H1 (cell line): ENCODE measurements at regions of chr11 and their contacts with region 1.

Region 1: GRCh38 chr11:70467201-70468085 is 69.1 kb downstream of the CTTN start:
- DNase-seq: peak in 1 of 2 experiments; percentile 91
- H3K4me3 ChIP-seq: no peak overlapping the region
- H3K27ac ChIP-seq: no peak overlapping the region
- H3K4me1 ChIP-seq: peaks cover 0 to 4% (median under 1%) of the 10 kb centered on the region in 4 experiments; a peak in 3 of 7 replicates
- H3K27me3 ChIP-seq: no peaks in the 10 kb centered on the region
- CTCF ChIP-seq: peak; percentile 70 to 81 (median 76)
- EP300 ChIP-seq: no peak
- POLR2A ChIP-seq: no peak
- RAD21 ChIP-seq: peak; percentile 93 to 95

Region 2: DNA sequence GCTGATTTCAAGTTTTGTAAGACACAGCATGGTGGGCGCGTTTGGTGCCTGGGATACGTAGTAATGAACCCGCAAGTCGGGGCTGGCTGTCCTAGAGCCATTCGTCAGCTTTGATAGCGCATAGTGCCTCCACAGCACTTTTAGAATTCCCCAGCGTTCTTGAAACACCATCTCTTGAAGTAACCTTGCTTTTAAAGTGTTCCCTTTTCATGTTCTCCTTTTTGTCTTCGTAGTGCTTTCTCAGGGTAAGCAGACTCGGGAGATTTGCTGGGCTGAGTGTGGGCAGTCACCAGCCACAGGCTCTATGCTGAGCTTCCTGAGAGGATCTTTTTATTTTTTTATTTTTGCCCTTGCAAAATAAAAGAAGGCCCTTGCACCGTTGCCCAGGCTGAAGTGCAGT is 108.7 kb before region 1 on chr11:
- CTCF ChIA-PET with region 1: no interaction called
- POLR2A ChIA-PET with region 1: no interaction called
- DNase-seq: peak in 1 of 2 experiments; percentile 24
- H3K4me3 ChIP-seq: no peak overlapping the region
- H3K27ac ChIP-seq: no peak overlapping the region
- H3K4me1 ChIP-seq: no peaks in the 10 kb centered on the region
- H3K27me3 ChIP-seq: no peaks in the 10 kb centered on the region
- CTCF ChIP-seq: no peak
- EP300 ChIP-seq: no peak
- POLR2A ChIP-seq: no peak
- RAD21 ChIP-seq: no peak

Region 3: GRCh38 chr11:70483077-70483861 is 15.8 kb after region 1 on chr11:
- CTCF ChIA-PET with region 1: interaction called, 90 read pairs
- POLR2A ChIA-PET with region 1: interaction called, 3 read pairs
- DNase-seq: no peak
- H3K4me3 ChIP-seq: no peak overlapping the region
- H3K27ac ChIP-seq: no peak overlapping the region
- H3K4me1 ChIP-seq: no peaks in the 10 kb centered on the region
- H3K27me3 ChIP-seq: no peaks in the 10 kb centered on the region
- CTCF ChIP-seq: peak; percentile 26 to 50 (median 45); a peak in 3 of 4 replicates
- EP300 ChIP-seq: no peak
- POLR2A ChIP-seq: no peak
- RAD21 ChIP-seq: peak; percentile 20 to 21; a peak in 2 of 4 replicates

Region 4: DNA sequence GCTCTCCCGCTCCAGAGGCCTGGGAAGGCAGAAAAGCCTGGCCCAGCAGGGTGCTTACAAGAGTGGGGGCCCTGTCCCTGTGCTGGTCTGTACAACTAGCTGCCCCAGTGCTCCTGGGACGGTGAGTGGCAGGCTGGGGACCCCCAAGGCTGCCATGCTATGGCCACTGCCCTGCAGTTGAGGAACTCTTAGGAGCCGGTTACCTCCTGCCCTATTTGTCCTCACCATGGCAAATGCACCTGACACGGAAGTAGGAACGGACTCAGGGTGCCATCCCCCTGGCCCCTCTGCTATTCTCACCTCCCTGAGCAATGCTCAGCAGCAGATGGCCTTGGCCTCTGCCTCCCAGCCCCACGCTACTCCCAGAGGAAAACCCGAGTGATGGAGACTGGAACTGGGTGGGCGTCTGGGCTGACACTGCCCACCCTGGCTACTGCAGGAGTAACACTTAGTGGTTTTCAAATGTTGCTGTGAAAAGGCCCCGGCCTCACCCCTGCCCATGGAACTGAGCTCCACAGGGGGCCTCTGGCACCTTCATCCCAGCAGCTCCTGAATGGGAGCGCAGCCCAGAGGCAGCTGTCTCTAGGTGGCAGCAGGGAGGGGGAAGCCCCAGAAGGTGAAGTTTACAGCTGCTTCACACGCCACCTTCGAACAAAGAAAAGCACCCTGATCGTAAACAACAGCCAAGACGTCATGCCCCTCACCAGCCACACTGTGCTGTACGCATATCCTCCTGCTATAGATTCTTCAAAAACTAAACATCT is 36.2 kb after region 1 on chr11:
- CTCF ChIA-PET with region 1: interaction called, 12 read pairs
- POLR2A ChIA-PET with region 1: no interaction called
- DNase-seq: no peak
- H3K4me3 ChIP-seq: no peak overlapping the region
- H3K27ac ChIP-seq: no peak overlapping the region
- H3K4me1 ChIP-seq: peaks cover 0 to 10% (median 6%) of the 10 kb centered on the region in 4 experiments; a peak in 4 of 7 replicates
- H3K27me3 ChIP-seq: no peaks in the 10 kb centered on the region
- CTCF ChIP-seq: peak in 2 of 3 experiments; percentile 35 to 41; a peak in 3 of 4 replicates
- EP300 ChIP-seq: no peak
- POLR2A ChIP-seq: no peak
- RAD21 ChIP-seq: peak; percentile 37 to 50

Region 5: DNA sequence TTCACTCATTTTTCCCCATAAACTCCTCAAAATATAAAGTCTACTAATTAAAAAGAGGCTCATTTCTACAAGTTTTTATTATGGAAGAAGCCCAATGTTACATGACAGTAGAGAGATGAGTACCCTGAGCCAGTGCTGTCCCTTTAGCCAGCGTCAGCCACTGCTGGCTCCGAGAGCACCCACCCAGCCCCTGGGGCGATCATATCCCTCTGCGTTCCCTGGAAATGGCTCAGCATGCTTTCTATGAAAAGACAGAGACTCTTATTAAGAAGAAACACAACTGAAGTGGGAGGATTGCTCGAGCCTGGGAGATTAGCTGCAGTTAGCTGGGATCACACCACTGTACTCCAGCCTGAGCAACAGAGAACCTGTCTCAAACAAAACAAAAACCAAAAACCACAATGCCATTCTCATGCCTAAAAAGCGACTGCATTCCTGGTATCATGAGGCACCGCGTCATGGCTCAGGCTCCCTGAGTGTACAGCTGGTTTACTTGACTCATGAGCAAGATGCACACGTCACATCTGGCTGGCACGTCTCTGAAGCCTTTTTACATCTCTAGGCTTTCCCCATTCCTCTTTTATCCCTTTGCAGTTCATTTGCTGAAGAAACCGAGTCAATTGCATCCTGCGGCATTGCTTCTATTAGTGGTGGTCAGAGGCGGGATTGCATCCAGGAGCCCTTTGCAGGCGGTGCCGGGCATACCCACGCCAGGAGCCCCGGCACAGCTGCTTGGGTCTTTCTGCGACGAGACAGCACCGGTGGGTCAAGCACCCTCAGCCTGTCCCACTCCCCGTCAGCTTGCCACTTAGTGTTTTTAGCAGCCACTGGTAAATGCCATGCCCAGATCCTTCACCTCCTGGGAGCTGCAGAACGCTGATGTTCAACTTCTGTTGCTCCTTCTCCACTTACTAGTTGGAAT is 50.8 kb after region 1 on chr11:
- CTCF ChIA-PET with region 1: interaction called, 11 read pairs
- POLR2A ChIA-PET with region 1: no interaction called
- DNase-seq: no peak
- H3K4me3 ChIP-seq: no peak overlapping the region
- H3K27ac ChIP-seq: no peak overlapping the region
- H3K4me1 ChIP-seq: peaks cover 0 to 14% (median 8%) of the 10 kb centered on the region in 4 experiments; a peak in 6 of 7 replicates
- H3K27me3 ChIP-seq: no peaks in the 10 kb centered on the region; a peak in 1 of 7 replicates
- CTCF ChIP-seq: peak in 2 of 3 experiments; percentile 11 to 14; a peak in 2 of 4 replicates
- EP300 ChIP-seq: no peak
- POLR2A ChIP-seq: no peak
- RAD21 ChIP-seq: peak in 1 of 2 experiments; percentile 3; a peak in 1 of 4 replicates

Region 6: DNA sequence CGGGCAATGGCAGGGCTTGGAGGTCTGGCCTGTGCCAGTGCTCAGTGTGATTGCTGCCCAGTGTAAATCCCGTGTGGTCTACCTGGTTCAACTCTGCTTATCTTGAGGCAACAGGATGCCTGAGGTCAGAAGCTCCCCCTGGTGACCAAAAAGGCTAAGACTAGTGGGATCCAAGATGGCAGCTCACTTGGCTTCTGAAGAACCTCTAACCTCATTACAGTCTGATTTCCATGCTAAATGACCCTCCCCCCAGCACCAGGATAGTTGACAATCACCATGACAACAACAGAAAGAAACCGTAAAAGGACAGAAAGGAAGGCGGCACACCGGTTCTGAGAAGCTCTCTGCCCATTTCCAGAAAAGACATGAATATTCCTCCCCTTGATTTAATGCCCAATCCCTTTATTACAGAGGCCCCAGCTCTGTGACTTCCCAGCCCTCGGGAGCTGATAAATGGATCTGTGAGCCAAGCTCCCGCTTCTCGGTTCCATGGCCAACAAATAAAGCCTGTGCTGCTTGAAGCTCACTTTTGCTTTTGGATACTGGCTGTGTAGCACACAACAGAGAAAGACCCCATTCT is 329.3 kb after region 1 on chr11:
- CTCF ChIA-PET with region 1: interaction called, 15 read pairs
- POLR2A ChIA-PET with region 1: interaction called, 3 read pairs
- DNase-seq: peak in 1 of 2 experiments; percentile 53
- H3K4me3 ChIP-seq: no peak overlapping the region
- H3K27ac ChIP-seq: no peak overlapping the region
- H3K4me1 ChIP-seq: peaks cover 0 to 4% (median 0%) of the 10 kb centered on the region in 4 experiments; a peak in 1 of 7 replicates
- H3K27me3 ChIP-seq: no peaks in the 10 kb centered on the region
- CTCF ChIP-seq: peak; percentile 27 to 72 (median 53)
- EP300 ChIP-seq: no peak
- POLR2A ChIP-seq: no peak
- RAD21 ChIP-seq: peak; percentile 34 to 52